ENCODE measurements at regions of chr1 and their contacts with region 1.

Region 1: DNA sequence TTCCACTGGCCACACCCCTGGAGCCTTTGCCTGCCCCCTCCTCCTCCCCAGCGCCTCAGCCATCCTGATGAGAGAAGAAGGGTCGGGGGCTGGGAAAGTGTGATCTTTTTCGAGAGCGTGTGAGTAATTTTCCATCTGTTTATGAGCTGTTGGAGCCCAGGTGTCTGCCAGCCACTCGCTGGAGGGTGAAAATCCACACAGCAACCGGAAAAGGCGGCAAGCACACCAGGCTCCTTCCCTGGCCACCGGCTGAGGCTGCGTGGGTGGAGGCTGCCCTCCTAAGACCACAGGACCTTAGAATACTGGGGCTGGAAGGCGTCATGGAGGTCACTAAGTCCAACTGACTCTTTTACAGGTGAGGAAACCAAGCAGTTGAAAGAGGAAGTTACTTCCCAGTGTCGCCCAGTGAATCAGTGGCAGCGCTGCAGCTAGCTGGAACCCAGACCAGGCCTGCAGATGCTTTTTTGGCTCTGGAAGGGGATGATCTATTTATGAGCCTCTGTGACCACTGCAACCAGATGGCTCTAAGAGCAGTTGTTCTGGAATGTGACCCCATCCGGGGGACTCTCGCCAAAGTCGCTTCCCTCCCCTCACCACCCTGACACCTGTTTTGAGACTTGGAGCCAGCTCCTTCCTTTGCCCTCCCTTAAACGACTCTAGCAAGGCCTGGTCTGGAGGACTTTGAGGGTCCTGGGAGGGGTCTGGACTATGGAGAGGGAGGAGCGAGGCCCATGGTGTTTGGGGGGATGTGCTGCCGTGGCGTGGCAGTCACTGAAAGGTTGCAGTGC is 54.5 kb downstream of the LGR6 start:
- DNase-seq: no peak
- ATAC-seq: no peak
- H3K4me3 ChIP-seq: no peak overlapping the region
- H3K27ac ChIP-seq: peak overlapping the region in 1 of 2 donors; percentile 52
- H3K4me1 ChIP-seq: peaks cover 4 to 7% of the 10 kb centered on the region in 2 donors
- H3K27me3 ChIP-seq: no peaks in the 10 kb centered on the region

Region 2: DNA sequence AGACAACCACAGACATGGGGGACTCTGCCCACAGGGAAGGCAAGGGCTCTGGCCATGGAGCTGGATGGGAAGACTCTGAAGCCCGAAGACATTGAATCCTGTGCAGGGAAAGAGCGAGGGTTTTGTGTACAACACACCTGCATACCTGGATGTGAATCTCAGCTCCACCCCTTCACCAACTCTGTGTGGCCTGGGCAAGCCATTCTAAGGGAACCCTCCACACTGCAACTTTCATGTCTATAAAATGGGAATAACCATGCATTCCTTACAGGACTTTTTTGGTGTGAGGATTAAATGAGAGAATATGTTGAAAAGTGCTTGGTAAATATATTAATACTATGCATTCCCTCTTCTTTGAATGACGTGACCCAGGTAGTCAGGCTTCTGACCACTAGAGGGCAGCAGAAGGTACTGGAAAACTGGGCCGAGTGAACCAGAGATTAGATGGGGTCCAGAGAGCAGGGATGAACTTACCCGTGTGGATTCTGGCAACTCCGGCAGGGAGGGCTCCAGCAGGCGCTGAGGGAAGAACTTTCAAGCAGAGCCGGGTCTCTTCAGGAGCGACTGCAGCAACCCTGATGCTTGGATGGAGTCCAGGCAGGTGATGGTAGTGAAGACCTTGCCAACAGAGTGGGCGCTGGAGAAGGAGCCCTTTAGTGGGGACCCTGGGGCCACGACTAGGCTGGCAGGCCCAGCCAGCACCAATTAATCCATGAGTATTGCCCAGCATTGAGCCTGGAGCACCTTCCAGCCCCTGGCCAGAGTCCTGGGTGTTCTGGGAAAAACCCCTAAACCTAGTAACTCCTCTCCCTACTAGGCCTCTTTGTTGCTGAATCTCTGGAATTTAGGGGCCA is 238.5 kb before region 1 on chr1:
- intact Hi-C with region 1: no loop called
- DNase-seq: peak in 1 of 2 donors; percentile 68
- ATAC-seq: peak; percentile 83
- H3K4me3 ChIP-seq: no peak overlapping the region
- H3K27ac ChIP-seq: no peak overlapping the region
- H3K4me1 ChIP-seq: no peaks in the 10 kb centered on the region
- H3K27me3 ChIP-seq: no peaks in the 10 kb centered on the region

Region 3: DNA sequence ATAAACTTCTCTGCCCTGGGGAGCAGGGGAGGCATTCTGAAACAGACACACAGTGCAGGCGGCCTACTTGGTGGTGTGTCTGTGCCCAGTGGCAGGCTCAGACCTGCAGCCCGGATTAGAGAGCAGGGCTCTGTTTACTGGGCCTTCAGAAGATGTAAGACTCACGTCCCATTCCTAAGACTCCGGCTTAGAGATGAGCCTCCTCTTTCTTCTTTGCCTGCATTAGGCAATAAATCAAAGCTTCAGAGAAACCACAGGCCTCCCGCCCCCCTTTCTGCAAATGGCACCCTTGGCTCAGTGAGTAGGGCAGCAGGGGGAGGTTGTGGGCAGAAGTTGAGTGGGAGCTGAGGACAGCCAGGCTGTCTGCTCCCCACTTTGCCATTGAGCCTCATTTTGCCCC is 18.7 kb before region 1 on chr1:
- intact Hi-C with region 1: loop called in 1 of 2 experiments (anchors 2 kb)
- DNase-seq: no peak
- ATAC-seq: no peak
- H3K4me3 ChIP-seq: no peak overlapping the region
- H3K27ac ChIP-seq: no peak overlapping the region
- H3K4me1 ChIP-seq: no peaks in the 10 kb centered on the region
- H3K27me3 ChIP-seq: no peaks in the 10 kb centered on the region

Region 4: DNA sequence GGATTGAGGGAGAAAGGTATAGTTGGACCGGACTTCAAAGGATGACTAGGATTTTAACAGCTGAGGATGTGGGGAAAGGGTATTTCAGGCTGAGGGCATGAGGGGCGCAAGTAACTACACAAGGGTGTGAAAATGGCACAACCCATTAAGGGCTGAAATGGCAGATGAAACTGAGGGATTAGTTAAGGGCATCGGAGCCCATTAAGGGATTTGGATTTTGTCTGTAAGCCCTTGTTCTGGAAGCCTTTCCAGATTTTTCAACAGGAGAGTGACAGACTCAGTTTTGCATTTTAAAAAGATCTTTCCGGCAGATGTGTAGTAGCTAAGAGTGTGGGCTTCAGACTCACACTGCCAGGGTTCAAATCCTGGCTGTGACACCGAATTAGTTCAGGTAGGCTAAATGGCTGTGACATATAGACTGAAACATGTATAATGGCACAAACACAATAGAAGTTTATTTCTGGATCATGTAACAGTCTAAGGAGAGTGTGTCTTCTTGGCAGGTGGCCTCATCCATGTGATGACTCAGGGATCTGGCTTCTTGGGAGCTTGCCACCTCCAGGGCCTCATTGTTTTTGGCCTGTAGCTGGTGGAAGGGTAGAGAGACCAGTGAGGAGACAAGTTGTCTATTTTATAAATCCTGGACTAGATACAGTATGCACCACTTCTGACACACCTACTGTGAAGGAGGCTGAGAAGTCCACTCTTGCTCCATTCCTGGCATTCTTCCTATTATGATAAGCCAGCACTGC is 44.0 kb after region 1 on chr1:
- intact Hi-C with region 1: loop called (anchors 5 to 10 kb)
- DNase-seq: peak in 1 of 2 donors; percentile 67
- ATAC-seq: peak; percentile 26
- H3K4me3 ChIP-seq: no peak overlapping the region
- H3K27ac ChIP-seq: peak overlapping the region in 1 of 2 donors; percentile 78
- H3K4me1 ChIP-seq: peaks cover 0 to 3% of the 10 kb centered on the region in 2 donors
- H3K27me3 ChIP-seq: no peaks in the 10 kb centered on the region

Region 5: GRCh38 chr1:202315576-202316168 is 67.6 kb after region 1 on chr1:
- intact Hi-C with region 1: no loop called
- DNase-seq: peak; percentile 87 to 90
- ATAC-seq: peak; percentile 71
- H3K4me3 ChIP-seq: no peak overlapping the region
- H3K27ac ChIP-seq: no peak overlapping the region
- H3K4me1 ChIP-seq: no peaks in the 10 kb centered on the region
- H3K27me3 ChIP-seq: no peaks in the 10 kb centered on the region

Region 6: DNA sequence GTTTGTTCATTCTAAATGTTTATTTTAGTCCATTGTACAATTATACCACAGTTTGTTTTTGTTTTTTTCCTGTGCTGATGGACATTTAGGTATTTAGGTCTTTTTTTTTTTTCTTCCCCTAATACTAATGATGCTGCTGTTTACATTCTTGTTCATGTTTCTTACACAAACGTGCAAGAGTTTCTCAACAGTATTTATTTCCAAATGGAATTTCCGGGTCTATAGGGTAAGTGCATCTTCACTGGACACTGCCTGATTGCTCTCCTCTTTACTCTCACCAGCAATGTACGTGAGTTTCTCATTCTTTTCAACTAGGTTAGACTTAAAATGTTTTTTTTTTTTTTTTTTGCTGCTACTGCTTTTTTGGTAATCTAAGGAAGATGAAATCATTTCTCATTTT is 223.2 kb after region 1 on chr1:
- intact Hi-C with region 1: no loop called
- DNase-seq: no peak
- ATAC-seq: no peak
- H3K4me3 ChIP-seq: no peak overlapping the region
- H3K27ac ChIP-seq: no peak overlapping the region
- H3K4me1 ChIP-seq: no peaks in the 10 kb centered on the region
- H3K27me3 ChIP-seq: no peaks in the 10 kb centered on the region

Measured in aorta (tissue), 5 donors.